HCT116 (cell line): ENCODE measurements at regions of chr2 and their contacts with region 1.

Region 1: GRCh38 chr2:24382363-24383073 is 22.2 kb upstream of the ITSN2 start:
- DNase-seq: peak; percentile 65
- ATAC-seq: peak; percentile 96
- H3K4me3 ChIP-seq: no peak overlapping the region; a peak in 1 of 4 replicates
- H3K27ac ChIP-seq: no peak overlapping the region
- H3K4me1 ChIP-seq: no peaks in the 10 kb centered on the region
- H3K27me3 ChIP-seq: no peaks in the 10 kb centered on the region
- CTCF ChIP-seq: peak; percentile 57 to 74 (median 67); a peak in 5 of 6 replicates
- POLR2A ChIP-seq: no peak
- RAD21 ChIP-seq: peak; percentile 82

Region 2: GRCh38 chr2:23988371-23988770 is 394.1 kb before region 1 on chr2:
- CTCF ChIA-PET with region 1: no interaction called
- POLR2A ChIA-PET with region 1: no interaction called
- RAD21 ChIA-PET with region 1: no interaction called
- intact Hi-C with region 1: loop called (anchors 10 kb)
- DNase-seq: no peak
- ATAC-seq: peak; percentile 78
- H3K4me3 ChIP-seq: no peak overlapping the region
- H3K27ac ChIP-seq: no peak overlapping the region
- H3K4me1 ChIP-seq: no peaks in the 10 kb centered on the region
- H3K27me3 ChIP-seq: no peaks in the 10 kb centered on the region
- CTCF ChIP-seq: peak; percentile 39 to 57 (median 56); a peak in 4 of 6 replicates
- POLR2A ChIP-seq: no peak
- RAD21 ChIP-seq: peak; percentile 66

Region 3: GRCh38 chr2:24228470-24228869 is 154.0 kb before region 1 on chr2:
- CTCF ChIA-PET with region 1: no interaction called
- POLR2A ChIA-PET with region 1: no interaction called
- RAD21 ChIA-PET with region 1: no interaction called
- intact Hi-C with region 1: loop called (anchors 1 kb)
- DNase-seq: no peak
- ATAC-seq: peak; percentile 75
- H3K4me3 ChIP-seq: no peak overlapping the region
- H3K27ac ChIP-seq: no peak overlapping the region
- H3K4me1 ChIP-seq: no peaks in the 10 kb centered on the region
- H3K27me3 ChIP-seq: no peaks in the 10 kb centered on the region
- CTCF ChIP-seq: peak; percentile 39 to 54 (median 41); a peak in 4 of 6 replicates
- POLR2A ChIP-seq: no peak
- RAD21 ChIP-seq: peak; percentile 59

Region 4: DNA sequence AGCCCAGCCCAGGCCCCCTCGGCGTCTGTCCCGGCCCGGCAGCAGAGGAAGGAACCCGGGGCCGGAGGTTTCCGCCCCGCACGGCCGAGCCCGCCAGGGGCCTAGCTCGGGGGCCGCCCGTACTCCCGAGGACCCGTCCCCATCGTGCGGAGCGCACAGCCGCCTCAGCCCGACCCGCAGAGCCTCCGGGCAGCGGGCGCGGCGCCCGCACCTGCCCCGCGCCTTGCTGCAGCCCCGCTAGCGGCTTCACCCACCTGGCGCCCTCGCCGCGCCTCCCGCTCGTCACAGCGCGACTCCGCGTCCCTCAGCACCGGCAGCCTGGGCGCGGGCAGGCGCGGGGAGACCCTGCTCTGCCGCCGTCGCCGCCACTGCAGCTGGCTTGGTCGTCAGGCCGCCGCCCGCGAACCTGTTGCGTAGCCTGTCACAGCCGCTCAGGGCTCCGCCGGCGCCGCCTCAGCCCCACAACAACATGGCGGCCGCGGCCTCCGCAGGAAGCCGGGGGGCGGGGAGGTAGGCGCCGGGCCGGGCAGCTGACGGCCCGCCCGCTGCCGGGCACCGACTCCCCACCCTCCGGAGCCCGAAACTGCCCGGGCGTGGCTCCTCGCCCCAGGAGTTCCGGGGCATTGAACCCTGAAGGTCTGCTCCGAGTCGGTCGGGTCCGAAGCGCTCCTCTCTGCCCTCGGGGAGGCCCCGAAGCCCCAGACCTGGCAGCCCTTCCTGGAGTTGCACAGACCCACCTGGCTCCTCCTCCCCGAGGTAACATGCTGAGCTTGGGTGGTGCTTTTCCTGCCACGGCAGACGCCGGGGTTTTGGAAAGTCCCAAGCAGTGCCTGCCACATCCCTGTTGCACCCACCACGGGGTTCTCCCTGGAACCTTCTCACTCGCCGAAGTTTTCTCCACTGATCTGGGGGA is 22.2 kb before region 1 on chr2 and contains the start of gene ITSN2:
- CTCF ChIA-PET with region 1: interaction called, 4 read pairs
- POLR2A ChIA-PET with region 1: interaction called, 3 read pairs
- RAD21 ChIA-PET with region 1: no interaction called
- intact Hi-C with region 1: loop called (anchors 2 kb)
- DNase-seq: peak; percentile 48
- ATAC-seq: peak; percentile 90
- H3K4me3 ChIP-seq: peak within 1 kb of the TSS; percentile 76 to 77
- H3K27ac ChIP-seq: peak within 1 kb of the TSS; percentile 90
- H3K4me1 ChIP-seq: peaks cover 10 to 23% of the 10 kb centered on the region in 2 experiments
- H3K27me3 ChIP-seq: no peaks in the 10 kb centered on the region
- CTCF ChIP-seq: no peak
- POLR2A ChIP-seq: no peak
- RAD21 ChIP-seq: no peak
- total RNA-seq, gene ITSN2: 26.5 TPM